Gastrocnemius medialis (tissue), 4 donors: ENCODE measurements at regions of chr10 and their contacts with region 1.

Region 1: DNA sequence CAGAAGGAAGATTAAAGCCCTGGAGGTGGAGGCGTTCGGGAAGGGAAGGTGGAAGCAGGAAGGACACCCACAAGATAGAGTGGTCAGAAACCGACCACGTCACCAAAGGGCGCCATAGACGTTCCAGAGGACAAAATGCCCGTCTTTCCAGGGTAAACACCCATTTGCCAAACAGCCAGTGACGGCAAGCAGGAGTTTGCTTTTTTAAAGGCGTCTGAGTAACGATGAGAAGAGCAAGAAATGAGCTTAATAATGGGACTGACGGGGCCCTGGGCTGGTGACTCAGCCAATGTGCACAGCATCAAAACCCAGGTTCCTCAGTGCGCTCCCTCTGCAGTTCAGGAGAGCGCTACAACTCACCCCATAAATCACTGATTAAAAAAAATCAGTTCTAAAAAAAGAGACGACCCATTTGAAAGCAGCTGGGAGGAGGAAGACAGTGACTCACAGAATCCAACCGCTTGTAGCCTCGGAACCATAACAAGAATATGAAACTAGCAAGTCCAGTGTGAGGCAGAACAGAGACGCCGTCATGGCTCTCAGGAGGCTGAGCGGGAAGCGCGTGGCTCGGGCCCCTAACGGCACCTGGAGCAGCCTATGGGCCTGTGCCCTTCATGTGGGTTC is 5.9 kb downstream of the DIP2C start:
- DNase-seq: peak; percentile 58 to 68
- ATAC-seq: peak; percentile 81 to 82
- H3K4me3 ChIP-seq: peak overlapping the region in 3 of 4 donors; percentile 2 to 47 (median 22)
- H3K27ac ChIP-seq: peak overlapping the region; percentile 77 to 88 (median 82)
- H3K4me1 ChIP-seq: peaks cover 49 to 67% of the 10 kb centered on the region in 2 donors
- H3K27me3 ChIP-seq: no peaks in the 10 kb centered on the region
- CTCF ChIP-seq: no peak
- POLR2A ChIP-seq: peak; percentile 25 to 73

Region 2: GRCh38 chr10:557792-558328 is 125.7 kb before region 1 on chr10:
- in situ Hi-C with region 1: no loop called
- intact Hi-C with region 1: no loop called
- DNase-seq: no peak
- ATAC-seq: no peak
- H3K4me3 ChIP-seq: no peak overlapping the region
- H3K27ac ChIP-seq: no peak overlapping the region
- H3K4me1 ChIP-seq: peaks cover 14 to 30% of the 10 kb centered on the region in 2 donors
- H3K27me3 ChIP-seq: no peaks in the 10 kb centered on the region
- CTCF ChIP-seq: no peak
- POLR2A ChIP-seq: no peak

Region 3: GRCh38 chr10:624605-625332 is 58.8 kb before region 1 on chr10:
- in situ Hi-C with region 1: loop called in 1 of 4 experiments (anchors 10 kb)
- intact Hi-C with region 1: loop called (anchors 2 kb)
- DNase-seq: peak; percentile 85 to 90
- ATAC-seq: peak; percentile 78 to 88
- H3K4me3 ChIP-seq: peak overlapping the region; percentile 22 to 54 (median 46)
- H3K27ac ChIP-seq: peak overlapping the region; percentile 87 to 92 (median 88)
- H3K4me1 ChIP-seq: peaks cover 51 to 53% of the 10 kb centered on the region in 2 donors
- H3K27me3 ChIP-seq: no peaks in the 10 kb centered on the region
- CTCF ChIP-seq: no peak
- POLR2A ChIP-seq: peak; percentile 35 to 38

Region 4: DNA sequence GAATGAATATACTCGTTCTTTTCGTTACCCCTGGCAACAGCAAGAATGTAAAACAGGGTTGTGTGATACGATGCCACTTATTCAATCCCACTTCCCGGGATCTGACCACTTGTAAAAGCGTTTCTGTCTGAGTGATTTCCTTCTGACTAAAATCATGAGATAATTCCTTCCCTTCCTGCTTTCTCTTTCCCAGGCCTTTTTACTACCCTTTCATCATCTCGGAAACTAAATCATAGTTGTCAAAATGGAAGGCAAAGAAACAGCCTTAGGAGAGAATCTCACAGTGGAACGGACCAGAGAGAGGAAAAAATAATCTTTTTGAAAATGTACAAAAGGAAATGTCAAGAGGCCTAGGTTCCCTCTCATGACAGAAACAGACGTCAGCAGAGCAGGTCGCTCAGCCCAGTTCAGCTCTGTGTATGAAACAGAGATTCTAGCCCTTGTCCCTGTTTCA is 23.8 kb before region 1 on chr10:
- in situ Hi-C with region 1: no loop called
- intact Hi-C with region 1: loop called (anchors 2 kb)
- DNase-seq: no peak
- ATAC-seq: no peak
- H3K4me3 ChIP-seq: peak overlapping the region in 1 of 4 donors; percentile 3
- H3K27ac ChIP-seq: peak overlapping the region; percentile 80 to 92 (median 90)
- H3K4me1 ChIP-seq: peaks cover 55 to 60% of the 10 kb centered on the region in 2 donors
- H3K27me3 ChIP-seq: no peaks in the 10 kb centered on the region
- CTCF ChIP-seq: no peak
- POLR2A ChIP-seq: no peak

Region 5: DNA sequence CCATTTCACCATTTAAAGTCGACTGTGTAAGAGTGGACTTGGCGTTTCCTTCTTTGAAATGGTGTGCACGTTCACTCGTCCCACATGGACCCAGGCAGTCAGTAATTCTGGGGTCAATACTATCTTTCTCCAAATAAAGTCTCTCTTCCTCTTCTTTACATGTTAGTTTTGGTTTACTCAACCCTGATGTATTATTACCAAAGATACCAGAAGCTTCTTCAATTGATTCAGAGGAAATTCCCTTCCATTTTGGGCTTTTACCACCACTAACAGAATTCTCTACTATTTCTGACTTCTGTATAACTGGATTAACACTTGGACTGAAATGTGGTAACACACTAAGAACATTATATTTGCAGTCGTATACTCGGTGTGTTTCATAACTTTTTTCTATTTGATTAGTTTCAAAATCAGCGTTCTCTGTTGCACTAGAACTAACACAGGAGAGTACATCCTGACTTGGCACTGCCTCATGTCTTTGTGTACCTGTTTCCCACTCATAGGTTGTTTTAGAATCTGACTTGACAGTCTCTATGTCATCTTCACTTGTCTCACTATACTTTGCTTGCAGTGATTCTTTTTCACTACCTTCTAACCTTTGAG is 187.1 kb after region 1 on chr10:
- in situ Hi-C with region 1: no loop called
- intact Hi-C with region 1: loop called (anchors 5 kb)
- DNase-seq: no peak
- ATAC-seq: no peak
- H3K4me3 ChIP-seq: no peak overlapping the region
- H3K27ac ChIP-seq: peak overlapping the region; percentile 93 to 95 (median 94)
- H3K4me1 ChIP-seq: peaks cover 72 to 75% of the 10 kb centered on the region in 2 donors
- H3K27me3 ChIP-seq: no peaks in the 10 kb centered on the region
- CTCF ChIP-seq: no peak
- POLR2A ChIP-seq: no peak

Region 6: GRCh38 chr10:1243486-1244234 is 560.1 kb after region 1 on chr10:
- in situ Hi-C with region 1: no loop called
- intact Hi-C with region 1: no loop called
- DNase-seq: no peak
- ATAC-seq: no peak
- H3K4me3 ChIP-seq: no peak overlapping the region
- H3K27ac ChIP-seq: no peak overlapping the region
- H3K4me1 ChIP-seq: no peaks in the 10 kb centered on the region
- H3K27me3 ChIP-seq: peaks cover 18 to 22% (median 18%) of the 10 kb centered on the region in 3 donors
- CTCF ChIP-seq: no peak
- POLR2A ChIP-seq: no peak